Activated B cell treated with CpG ODN at 0.5 μM for 24 hours (primary cell): ENCODE measurements at regions of chr11 and their contacts with region 1.

Region 1: DNA sequence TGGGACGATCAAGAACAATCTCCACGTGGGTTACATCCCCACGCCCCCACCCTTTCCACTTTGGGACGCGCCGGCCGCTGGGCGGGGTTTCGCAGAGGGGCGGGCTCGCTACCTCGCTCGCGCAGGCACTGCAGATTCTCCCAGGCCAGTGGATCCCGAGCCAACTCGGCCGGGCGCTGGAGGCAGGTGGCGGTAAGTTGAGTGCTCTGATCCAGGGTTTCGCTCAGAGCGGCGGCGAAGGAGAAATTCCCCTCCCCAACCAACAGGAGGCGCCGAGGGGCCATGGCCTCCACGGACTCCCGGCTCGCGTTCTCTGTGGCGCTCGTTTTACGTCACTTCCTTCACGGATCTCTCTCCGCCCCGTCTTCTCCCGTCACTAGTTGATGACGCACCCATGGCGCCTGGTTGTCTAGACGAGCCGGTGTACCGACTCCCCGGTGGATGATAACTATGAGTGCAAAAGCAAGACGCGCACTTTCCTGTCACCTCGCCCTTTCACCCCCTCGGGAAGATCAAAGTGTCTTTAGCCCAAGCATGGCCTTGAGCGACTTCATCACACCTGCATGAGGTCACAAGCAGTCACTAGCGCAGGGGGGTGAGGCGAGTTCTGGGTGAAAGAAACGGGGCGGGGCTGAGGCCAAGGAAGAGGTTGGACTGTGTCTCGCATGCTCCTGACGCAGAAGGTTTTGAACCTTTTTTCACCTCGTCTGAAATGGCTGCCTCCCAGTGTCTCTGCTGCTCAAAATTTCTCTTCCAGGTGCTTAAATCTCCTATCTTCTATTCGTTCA is at the starts of genes CFAP68 and FDXACB1:
- DNase-seq: peak; percentile 88
- ATAC-seq: peak; percentile 88
- H3K4me3 Mint-ChIP-seq: peak within 1 kb of the TSS; percentile 96
- H3K27ac Mint-ChIP-seq: peak within 1 kb of the TSS; percentile 100
- H3K4me1 Mint-ChIP-seq: peaks cover 17% of the 10 kb centered on the region
- H3K27me3 Mint-ChIP-seq: no peaks in the 10 kb centered on the region
- CTCF ChIP-seq: peak; percentile 59
- total RNA-seq, gene CFAP68: 11.6 and 13.7 TPM in 2 replicates
- total RNA-seq, gene FDXACB1: 7.4 and 7.8 TPM in 2 replicates

Region 2: DNA sequence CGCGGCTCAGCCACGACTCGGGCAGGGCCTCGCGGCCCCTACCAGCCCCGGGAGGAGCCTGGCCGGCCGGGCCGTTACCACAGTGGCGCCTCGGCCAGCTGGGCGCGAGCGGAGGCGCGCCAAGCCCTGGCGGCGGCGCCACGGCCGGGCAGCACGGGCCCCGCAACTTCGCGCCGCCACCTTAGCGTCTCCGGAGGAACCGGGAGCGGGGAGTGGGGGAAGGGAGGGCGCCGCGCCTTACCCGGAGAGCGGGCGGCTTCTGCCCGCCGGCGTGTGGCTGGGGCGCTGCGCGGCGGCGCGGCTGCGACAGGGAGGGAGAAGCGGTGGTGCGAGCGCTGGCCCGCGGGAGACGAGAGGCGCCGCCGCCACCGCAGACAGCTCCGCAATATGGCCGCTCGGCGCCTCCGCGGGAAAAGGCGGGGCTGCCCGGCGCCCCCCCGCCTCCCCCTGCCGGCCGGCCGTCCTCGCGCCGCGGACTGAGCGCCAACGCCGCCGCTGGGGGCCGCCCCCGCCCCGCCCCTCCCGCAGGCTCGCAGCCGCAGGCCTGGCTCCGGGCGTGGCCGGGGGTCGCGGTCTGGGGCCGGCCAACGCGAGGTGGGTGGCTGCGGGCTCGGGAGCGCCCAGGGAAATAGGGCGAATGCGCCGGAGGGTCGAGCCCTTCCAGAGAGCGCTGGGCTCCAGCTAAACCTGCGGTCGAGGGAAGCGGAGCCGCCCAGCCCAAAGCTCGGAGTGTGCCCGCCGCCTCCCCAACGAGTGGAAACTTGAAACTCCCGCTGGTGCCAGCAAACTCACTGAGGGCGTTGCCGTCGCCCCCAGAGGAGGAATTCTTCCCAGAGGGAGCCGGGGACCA is 1582.6 kb before region 1 on chr11 and contains the start of gene RDX:
- CTCF ChIA-PET with region 1: no interaction called
- POLR2A ChIA-PET with region 1: no interaction called
- intact Hi-C with region 1: loop called (anchors 5 kb)
- DNase-seq: peak; percentile 74
- ATAC-seq: peak; percentile 83
- H3K4me3 Mint-ChIP-seq: peak within 1 kb of the TSS; percentile 87
- H3K27ac Mint-ChIP-seq: peak within 1 kb of the TSS; percentile 71
- H3K4me1 Mint-ChIP-seq: peaks cover 30% of the 10 kb centered on the region
- H3K27me3 Mint-ChIP-seq: no peaks in the 10 kb centered on the region
- CTCF ChIP-seq: no peak
- total RNA-seq, gene RDX: 27.4 and 27.9 TPM in 2 replicates

Region 3: DNA sequence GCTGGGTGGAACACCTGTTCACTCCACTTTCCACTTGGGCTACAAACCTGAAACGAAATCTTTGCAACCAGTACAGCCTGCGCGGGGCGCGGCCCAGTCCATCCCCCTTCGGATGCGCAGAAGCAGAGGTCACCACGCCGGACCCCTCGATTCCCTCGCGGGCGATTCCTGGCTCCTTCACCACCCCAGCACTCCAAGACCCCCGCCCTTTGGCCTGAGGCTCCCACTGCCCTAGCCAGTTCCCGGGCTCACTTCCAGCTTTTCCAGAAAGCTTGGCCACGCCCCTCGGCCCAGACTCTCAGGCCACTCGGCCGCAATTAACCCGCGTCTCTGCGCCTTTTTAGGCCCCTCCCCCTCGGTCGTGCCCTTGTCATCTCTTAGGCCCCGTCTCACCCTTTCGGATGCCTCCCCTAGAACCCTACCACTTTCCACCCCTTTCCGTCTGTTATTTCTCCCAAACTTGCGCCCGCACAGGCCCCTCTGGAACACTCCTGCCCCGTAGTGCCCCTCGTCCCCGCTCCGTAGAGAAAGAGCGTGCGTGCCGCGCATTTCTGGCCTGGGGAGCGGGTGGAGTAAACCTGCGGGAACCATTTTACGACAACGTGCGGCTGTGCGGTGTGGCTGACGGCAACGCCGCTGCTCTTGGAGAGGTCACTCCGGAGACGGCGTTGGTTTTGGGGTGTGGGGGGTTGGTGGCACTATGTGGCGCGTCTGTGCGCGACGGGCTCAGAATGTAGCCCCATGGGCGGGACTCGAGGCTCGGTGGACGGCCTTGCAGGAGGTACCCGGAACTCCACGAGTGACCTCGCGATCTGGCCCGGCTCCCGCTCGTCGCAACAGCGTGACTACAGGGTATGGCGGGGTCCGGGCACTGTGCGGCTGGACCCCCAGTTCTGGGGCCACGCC is 146.0 kb after region 1 on chr11 and contains the start of gene DLAT:
- CTCF ChIA-PET with region 1: no interaction called
- POLR2A ChIA-PET with region 1: no interaction called
- intact Hi-C with region 1: loop called (anchors 1 kb)
- DNase-seq: peak; percentile 78
- ATAC-seq: peak; percentile 77
- H3K4me3 Mint-ChIP-seq: peak within 1 kb of the TSS; percentile 100
- H3K27ac Mint-ChIP-seq: peak within 1 kb of the TSS; percentile 100
- H3K4me1 Mint-ChIP-seq: peaks cover 37% of the 10 kb centered on the region
- H3K27me3 Mint-ChIP-seq: no peaks in the 10 kb centered on the region
- CTCF ChIP-seq: no peak
- total RNA-seq, gene DLAT: 27.5 and 31.5 TPM in 2 replicates

Region 4: DNA sequence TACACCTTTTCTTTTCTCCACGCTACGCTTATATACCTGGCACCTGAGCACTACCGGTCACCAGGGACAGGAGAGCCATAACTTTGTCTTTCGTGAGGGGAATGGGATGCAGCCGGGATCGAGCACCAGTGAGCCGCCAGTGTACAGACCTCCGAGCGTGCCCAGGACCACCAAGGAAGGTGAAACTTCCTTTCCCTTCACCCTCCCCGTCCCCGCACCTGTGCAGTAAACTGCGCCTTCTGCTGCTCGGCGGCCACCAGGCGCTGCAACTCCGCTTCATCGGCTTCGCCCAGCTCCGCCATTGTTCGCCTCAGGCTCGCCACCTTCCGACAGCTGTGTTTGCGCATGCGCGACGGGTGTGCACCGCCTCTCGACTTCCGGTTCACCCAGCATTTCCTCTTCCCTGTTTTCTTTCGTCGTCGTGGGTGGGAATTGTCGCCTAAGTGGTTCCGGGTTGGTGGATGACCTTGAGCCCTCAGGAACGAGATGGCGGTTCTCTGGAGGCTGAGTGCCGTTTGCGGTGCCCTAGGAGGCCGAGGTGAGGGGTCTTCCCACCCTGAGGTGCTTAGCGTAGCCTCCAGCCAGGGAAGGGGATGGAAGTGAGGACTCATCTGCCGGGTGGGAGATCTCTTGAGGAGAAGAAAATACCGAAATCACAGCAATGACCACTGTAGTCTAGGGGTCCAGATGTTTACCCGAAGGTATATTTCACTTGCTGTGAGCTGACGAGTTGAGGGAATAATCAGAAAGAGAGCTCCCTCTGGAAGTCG is 207.6 kb after region 1 on chr11 and contains the starts of genes SDHD and TIMM8B:
- CTCF ChIA-PET with region 1: interaction called, 3 read pairs
- POLR2A ChIA-PET with region 1: no interaction called
- intact Hi-C with region 1: loop called (anchors 1 kb)
- DNase-seq: peak; percentile 88
- ATAC-seq: peak; percentile 88
- H3K4me3 Mint-ChIP-seq: peak within 1 kb of the TSS; percentile 100
- H3K27ac Mint-ChIP-seq: peak within 1 kb of the TSS; percentile 97
- H3K4me1 Mint-ChIP-seq: peaks cover 45% of the 10 kb centered on the region
- H3K27me3 Mint-ChIP-seq: no peaks in the 10 kb centered on the region
- CTCF ChIP-seq: no peak
- total RNA-seq, gene SDHD: 79.9 and 82.1 TPM in 2 replicates
- total RNA-seq, gene TIMM8B: 37.0 and 39.6 TPM in 2 replicates

Region 5: GRCh38 chr11:112226062-112226830 is 347.2 kb after region 1 on chr11 and contains the start of gene PTS:
- CTCF ChIA-PET with region 1: no interaction called
- POLR2A ChIA-PET with region 1: no interaction called
- intact Hi-C with region 1: loop called (anchors 2 kb)
- DNase-seq: peak; percentile 87
- ATAC-seq: peak; percentile 93
- H3K4me3 Mint-ChIP-seq: peak within 1 kb of the TSS; percentile 92
- H3K27ac Mint-ChIP-seq: peak within 1 kb of the TSS; percentile 96
- H3K4me1 Mint-ChIP-seq: peaks cover 13% of the 10 kb centered on the region
- H3K27me3 Mint-ChIP-seq: no peaks in the 10 kb centered on the region
- CTCF ChIP-seq: no peak
- total RNA-seq, gene PTS: 22.7 and 30.4 TPM in 2 replicates

Region 6: DNA sequence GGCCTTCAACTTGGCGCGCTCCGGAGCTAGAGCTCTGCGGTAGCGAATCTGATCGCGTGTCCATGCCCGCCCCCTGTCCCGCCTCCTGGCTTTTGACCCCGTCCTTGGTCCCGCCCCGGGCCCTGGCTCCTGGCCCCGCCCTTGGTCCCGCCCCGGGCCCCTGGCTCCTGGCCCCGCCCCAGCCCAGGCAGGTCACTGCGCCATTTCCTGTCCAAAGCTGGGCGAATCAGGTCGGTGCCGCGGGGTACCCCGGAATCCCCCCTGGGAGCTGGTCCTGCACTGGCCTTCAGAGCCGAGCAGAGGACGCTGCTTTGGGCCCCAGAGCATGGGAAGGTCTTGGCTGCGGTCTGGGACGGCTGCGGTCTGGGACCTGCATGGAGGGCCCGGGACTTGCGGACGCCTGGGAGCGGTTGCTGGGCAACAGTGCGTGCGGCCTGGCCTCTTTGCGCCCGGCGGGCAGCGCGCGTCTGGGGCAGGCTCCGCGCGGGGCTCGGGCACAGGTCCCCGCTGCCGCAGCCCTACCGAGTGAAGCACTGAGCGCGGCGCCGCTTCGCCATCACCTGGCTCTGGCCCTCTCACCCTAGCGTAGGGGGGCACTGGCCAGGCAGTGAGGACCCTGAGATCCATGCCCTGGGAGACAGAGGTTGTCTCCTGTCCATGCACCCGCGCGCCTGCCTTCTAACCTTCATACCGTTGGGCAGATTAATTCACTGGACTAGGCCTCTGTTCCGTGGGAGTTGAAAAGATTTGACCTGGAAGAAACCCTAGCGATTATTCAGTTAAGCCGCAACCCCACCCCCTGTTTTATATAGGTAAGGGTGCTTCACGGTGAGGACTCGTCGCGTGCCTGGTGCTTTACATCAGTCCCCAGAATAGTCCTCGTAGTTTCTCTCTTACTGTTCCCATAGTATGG is 1435.6 kb after region 1 on chr11 and contains the start of gene TTC12:
- CTCF ChIA-PET with region 1: no interaction called
- POLR2A ChIA-PET with region 1: no interaction called
- intact Hi-C with region 1: loop called (anchors 2 kb)
- DNase-seq: peak; percentile 98
- ATAC-seq: peak; percentile 99
- H3K4me3 Mint-ChIP-seq: peak within 1 kb of the TSS; percentile 85
- H3K27ac Mint-ChIP-seq: peak within 1 kb of the TSS; percentile 83
- H3K4me1 Mint-ChIP-seq: peaks cover 19% of the 10 kb centered on the region
- H3K27me3 Mint-ChIP-seq: no peaks in the 10 kb centered on the region
- CTCF ChIP-seq: no peak
- total RNA-seq, gene TTC12: 21.3 and 25.2 TPM in 2 replicates